Psoas muscle (tissue), 8 donors: ENCODE measurements at regions of chr3 and their contacts with region 1.

Region 1: DNA sequence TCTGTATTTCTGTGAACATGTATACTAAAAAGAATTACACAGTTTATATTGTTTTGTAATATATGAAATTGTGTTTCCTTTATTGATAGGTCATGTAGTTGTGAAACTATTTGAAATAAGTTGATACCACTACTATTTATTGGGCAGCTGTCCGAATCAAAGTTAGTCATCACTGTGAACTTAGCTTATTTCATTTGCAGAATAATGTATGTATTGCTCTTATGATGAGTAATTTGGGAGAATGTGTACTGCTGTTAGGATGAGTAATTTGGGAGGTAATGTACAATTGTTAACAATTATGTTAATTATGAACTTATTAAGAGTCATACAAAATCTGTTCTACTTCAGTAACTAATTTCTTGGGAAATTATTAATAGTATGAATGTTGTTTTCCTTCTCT is 22.2 kb downstream of the FXR1 start:
- DNase-seq: no peak
- ATAC-seq: no peak
- H3K4me3 ChIP-seq: no peak overlapping the region
- H3K27ac ChIP-seq: no peak overlapping the region
- H3K4me1 ChIP-seq: peaks cover 43% of the 10 kb centered on the region
- H3K27me3 ChIP-seq: no peaks in the 10 kb centered on the region
- CTCF ChIP-seq: no peak

Region 2: DNA sequence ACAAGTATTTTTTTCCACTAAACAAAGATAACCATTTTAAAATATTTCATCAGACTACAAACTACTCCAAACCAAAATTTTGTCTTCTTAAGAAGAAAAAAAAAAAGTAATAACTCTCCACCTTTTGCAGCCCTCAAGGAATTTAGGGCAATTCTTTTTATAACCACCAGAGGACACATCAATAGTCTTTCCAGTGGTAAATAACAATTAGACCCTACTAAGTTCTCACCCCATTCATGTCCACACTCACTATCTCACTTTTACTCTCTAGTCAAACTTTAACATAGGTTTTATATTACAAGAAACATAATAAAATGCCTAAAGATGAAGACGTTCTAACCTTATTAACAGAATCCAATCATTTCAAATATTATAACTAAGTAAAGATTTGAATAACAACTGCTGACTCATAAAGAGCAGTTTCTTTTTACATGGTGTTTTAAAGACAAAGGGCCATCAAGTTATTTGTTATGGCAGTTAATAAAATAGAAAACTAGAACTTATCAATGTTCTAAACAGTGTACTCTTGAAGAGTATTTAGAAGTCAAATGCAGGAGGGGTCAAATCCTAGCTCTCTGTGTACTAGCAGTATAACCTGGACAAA is 288.3 kb before region 1 on chr3:
- intact Hi-C with region 1: no loop called
- DNase-seq: no peak
- ATAC-seq: no peak
- H3K4me3 ChIP-seq: no peak overlapping the region
- H3K27ac ChIP-seq: no peak overlapping the region
- H3K4me1 ChIP-seq: no peaks in the 10 kb centered on the region
- H3K27me3 ChIP-seq: peaks cover 0 to 2% (median 0%) of the 10 kb centered on the region in 3 donors
- CTCF ChIP-seq: no peak

Region 3: DNA sequence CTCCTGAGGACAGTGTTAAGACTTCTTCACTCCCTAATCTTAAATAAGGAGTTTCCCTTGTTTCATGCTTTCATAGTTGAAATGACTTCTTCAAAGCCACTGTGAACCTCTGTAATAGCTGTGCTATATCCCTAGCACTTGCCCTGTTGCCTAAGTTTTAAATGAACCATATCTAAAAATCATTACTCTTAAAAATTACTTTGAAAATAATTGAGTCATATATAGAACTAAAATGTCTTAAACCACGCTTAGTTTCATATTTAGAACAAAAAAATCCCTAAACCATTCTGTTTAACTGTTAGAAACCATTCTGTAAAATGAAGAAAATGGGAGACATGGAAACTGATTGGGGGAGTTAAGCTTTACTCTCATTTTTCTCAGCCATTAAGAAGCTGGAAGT is 25.1 kb after region 1 on chr3:
- intact Hi-C with region 1: loop called in 1 of 2 experiments (anchors 2 kb)
- DNase-seq: no peak
- ATAC-seq: no peak
- H3K4me3 ChIP-seq: no peak overlapping the region
- H3K27ac ChIP-seq: no peak overlapping the region
- H3K4me1 ChIP-seq: no peaks in the 10 kb centered on the region
- H3K27me3 ChIP-seq: no peaks in the 10 kb centered on the region
- CTCF ChIP-seq: no peak

Region 4: DNA sequence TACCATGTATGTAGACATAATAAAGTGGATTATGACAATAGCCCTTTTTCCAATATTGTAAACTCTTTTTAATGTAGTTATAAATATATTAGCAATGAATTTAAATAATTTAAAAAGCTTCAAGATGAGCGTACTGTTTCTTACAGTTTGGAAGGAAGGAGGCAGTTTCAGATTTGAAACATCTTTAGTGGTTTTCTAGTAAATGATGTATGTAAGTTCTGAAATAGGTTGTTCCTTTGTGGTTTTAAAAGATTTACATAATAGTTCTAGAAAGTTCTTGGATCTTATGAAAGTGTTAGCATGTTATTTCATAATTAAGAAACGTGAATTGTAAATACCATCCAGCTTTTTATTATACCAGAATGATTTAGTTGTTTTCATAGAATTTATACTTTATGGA is 38.9 kb after region 1 on chr3:
- intact Hi-C with region 1: loop called (anchors 5 kb)
- DNase-seq: no peak
- ATAC-seq: no peak
- H3K4me3 ChIP-seq: no peak overlapping the region
- H3K27ac ChIP-seq: no peak overlapping the region
- H3K4me1 ChIP-seq: no peaks in the 10 kb centered on the region
- H3K27me3 ChIP-seq: no peaks in the 10 kb centered on the region
- CTCF ChIP-seq: no peak